HEK293 (cell line): ENCODE measurements at regions of chr19 and their contacts with region 1.

Region 1: GRCh38 chr19:50537762-50538230 is 24.1 kb upstream of the ASPDH start:
- H3K4me3 ChIP-seq: no peak overlapping the region
- H3K27ac ChIP-seq: no peak overlapping the region
- H3K4me1 ChIP-seq: no peaks in the 10 kb centered on the region
- CTCF ChIP-seq: peak; percentile 91

Region 2: GRCh38 chr19:50290011-50290410 is 247.8 kb before region 1 on chr19:
- CTCF ChIA-PET with region 1: no interaction called
- POLR2A ChIA-PET with region 1: no interaction called
- H3K4me3 ChIP-seq: no peak overlapping the region
- H3K27ac ChIP-seq: no peak overlapping the region
- H3K4me1 ChIP-seq: no peaks in the 10 kb centered on the region
- CTCF ChIP-seq: no peak

Region 3: DNA sequence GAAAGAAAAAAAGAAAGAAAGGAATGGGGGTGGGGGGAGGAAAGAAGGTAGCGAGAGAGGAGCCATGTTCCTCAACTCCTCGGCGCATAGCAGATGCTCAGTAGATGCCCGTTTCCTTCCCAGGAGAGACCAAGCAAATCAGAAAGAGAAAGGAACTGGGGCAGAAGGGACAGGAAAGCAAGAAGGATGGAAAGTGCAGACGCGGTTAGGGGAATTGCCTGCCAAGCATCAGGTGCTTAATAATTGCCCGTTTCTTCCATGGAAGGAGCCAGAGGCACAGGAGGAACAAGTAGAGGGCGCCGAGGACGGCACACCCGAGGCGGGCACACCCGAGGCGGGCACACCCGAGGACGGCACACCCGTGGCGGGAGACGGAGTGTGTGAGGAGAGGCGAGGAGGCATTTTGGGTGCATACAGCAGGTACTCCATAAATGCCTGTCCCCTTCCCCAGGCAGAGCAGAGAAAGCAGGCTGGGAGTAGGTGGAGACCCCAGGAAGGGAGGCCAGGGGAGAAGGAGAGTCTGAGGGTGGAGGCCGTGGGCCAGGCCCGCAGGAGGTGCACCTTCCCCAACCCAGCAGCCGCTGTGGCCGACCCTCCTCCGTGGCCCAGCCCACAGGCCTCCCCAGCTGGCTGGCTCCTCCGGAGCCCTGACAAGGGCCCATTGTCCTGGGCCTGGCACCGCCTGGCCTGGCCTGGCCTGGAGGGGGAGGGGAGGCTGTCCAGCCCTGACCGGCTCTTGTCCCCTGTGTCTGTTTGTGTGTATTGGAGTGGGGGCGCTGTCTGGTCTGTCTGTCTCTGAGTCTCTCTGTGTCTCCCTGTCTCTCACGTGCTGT is 41.4 kb before region 1 on chr19:
- CTCF ChIA-PET with region 1: no interaction called
- POLR2A ChIA-PET with region 1: no interaction called
- H3K4me3 ChIP-seq: no peak overlapping the region
- H3K27ac ChIP-seq: no peak overlapping the region
- H3K4me1 ChIP-seq: peaks cover 7% of the 10 kb centered on the region
- CTCF ChIP-seq: no peak

Region 4: GRCh38 chr19:50511068-50511822 is 26.6 kb before region 1 on chr19 and contains the start of gene JOSD2:
- CTCF ChIA-PET with region 1: interaction called, 11 read pairs
- POLR2A ChIA-PET with region 1: no interaction called
- H3K4me3 ChIP-seq: peak within 1 kb of the TSS; percentile 64
- H3K27ac ChIP-seq: peak within 1 kb of the TSS; percentile 76
- H3K4me1 ChIP-seq: peaks cover 5% of the 10 kb centered on the region
- CTCF ChIP-seq: no peak

Region 5: GRCh38 chr19:50556282-50557008 is 18.6 kb after region 1 on chr19:
- CTCF ChIA-PET with region 1: interaction called, 210 read pairs
- POLR2A ChIA-PET with region 1: interaction called, 5 read pairs
- H3K4me3 ChIP-seq: peak overlapping the region; percentile 42
- H3K27ac ChIP-seq: peak overlapping the region; percentile 46; the same call in 1 of the 2 replicates
- H3K4me1 ChIP-seq: peaks cover 4% of the 10 kb centered on the region; the same call in 1 of the 2 replicates
- CTCF ChIP-seq: peak; percentile 98

Region 6: DNA sequence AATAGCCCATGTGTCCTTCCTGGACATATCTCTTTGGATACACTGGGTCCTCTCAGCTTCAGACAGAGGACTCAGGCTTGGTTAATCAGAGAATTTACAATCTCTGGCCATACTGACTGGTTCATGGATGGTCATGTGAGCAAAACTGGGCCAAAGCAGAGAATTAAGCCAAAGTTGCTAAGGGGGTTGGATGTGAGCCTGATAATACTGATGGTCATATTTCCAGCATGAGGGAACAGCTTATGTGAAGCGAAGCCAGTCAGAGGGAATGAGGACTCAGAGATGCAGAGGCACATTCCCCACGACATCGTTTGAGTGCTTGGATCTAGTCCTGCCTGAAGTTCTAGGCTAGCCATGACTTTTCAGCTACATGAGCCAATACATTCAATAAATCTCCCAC is 52.4 kb after region 1 on chr19:
- CTCF ChIA-PET with region 1: interaction called, 10 read pairs
- POLR2A ChIA-PET with region 1: no interaction called
- H3K4me3 ChIP-seq: no peak overlapping the region
- H3K27ac ChIP-seq: no peak overlapping the region
- H3K4me1 ChIP-seq: no peaks in the 10 kb centered on the region
- CTCF ChIP-seq: no peak

Region 7: DNA sequence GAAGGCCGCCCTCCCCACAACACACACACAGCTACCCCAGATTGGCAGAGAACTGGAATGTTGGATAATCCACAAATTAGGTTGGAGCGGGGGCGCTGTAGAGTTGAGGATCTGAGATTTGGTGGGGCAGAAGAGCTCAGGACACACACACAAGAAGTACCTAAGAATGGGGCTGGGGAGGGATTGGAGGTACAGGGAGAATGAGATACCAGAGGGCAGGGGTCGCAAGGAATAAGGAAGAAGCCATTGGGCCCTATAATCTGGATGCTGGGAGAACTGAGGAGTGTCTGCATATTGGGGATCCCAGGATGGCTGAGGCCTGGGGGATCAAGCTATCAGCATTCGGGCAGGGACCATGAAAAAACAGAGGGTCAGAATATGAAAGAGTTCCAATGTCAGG is 90.3 kb after region 1 on chr19:
- CTCF ChIA-PET with region 1: no interaction called
- POLR2A ChIA-PET with region 1: no interaction called
- H3K4me3 ChIP-seq: no peak overlapping the region
- H3K27ac ChIP-seq: no peak overlapping the region
- H3K4me1 ChIP-seq: no peaks in the 10 kb centered on the region
- CTCF ChIP-seq: no peak

Region 8: DNA sequence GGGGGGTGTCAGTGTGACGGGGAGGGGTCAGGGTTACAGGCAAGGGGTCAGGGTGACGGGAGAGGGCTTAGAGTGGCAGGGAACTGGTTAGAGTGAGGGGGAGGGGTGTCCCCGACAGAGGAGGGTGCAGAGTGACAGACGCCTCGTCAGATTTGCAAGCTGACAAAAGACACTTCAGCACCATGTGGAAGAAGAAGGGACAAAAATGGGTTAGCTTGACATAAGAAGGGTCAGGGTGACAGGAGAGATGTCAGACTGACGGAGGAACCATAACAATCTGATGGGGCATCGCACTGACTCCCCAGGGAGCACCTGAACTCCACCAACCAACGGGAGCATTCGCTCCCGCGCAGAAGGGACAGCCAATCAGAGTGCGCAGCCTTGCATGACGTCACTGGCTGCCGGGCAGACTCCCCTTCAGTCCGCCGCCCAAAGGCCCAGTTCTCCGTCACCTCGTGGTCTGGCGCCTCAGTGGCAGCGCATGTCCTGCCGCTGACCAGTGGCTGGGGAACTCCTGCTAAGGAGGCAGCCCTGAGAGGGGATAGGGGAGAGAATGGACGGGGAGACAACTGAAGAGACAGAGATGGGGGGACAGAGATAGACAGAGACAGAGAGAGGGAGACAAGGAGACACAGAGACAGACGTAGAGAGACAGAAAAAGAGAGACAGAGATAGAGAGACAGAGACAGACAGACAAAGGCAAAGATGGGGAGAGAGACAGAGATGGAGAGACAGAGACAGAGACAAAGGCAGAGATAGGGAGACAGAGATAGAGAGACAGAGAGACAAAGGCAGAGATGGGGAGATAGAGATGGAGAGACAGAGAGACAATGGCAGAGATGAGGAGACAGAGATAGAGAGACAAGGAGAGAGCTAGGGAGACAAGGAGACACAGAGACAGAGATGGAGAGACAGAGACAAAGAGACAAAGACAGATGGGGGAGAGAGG is 141.7 kb after region 1 on chr19:
- CTCF ChIA-PET with region 1: interaction called, 3 read pairs
- POLR2A ChIA-PET with region 1: interaction called, 10 read pairs
- H3K4me3 ChIP-seq: no peak overlapping the region
- H3K27ac ChIP-seq: no peak overlapping the region
- H3K4me1 ChIP-seq: no peaks in the 10 kb centered on the region
- CTCF ChIP-seq: no peak

Region 9: GRCh38 chr19:50724522-50725217 is 186.9 kb after region 1 on chr19:
- CTCF ChIA-PET with region 1: interaction called, 15 read pairs
- POLR2A ChIA-PET with region 1: no interaction called
- H3K4me3 ChIP-seq: peak overlapping the region; percentile 78
- H3K27ac ChIP-seq: peak overlapping the region; percentile 77
- H3K4me1 ChIP-seq: peaks cover 7% of the 10 kb centered on the region; the same call in 1 of the 2 replicates
- CTCF ChIP-seq: peak; percentile 100